ENCODE measurements at regions of chr15 and their contacts with region 1.

Region 1: DNA sequence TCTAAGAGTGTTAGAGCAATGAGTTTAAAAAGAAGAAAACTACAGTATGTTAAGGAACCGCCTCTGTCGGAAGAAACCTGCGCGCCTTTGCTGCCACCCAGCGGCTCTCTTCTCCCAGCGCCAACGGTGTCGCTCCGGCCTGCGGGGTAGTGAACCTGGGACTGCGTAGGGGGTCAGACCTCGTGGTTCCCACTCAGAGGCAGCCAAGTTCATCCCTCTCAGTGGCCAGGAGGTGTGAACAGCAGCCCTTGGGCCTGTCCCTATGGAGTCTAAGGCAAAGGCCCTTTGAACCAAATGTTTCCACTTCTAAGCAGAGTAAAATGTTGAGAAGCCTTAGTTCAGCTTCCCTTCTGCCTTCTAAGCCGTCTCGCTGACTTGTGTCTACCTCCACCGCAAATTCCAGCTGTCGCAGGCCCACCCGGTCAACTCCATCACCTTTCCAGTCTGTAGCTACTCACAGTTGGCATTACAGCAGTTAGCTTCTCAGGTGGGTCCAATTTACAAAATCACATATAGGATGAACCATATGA is 980 bp upstream of the RAB27A start:
- H3K4me3 ChIP-seq: peak overlapping the region; percentile 70
- H3K27ac ChIP-seq: no peak overlapping the region
- H3K4me1 ChIP-seq: peaks cover 2% of the 10 kb centered on the region; the same call in 1 of the 2 replicates
- CTCF ChIP-seq: peak; percentile 77

Region 2: GRCh38 chr15:55196458-55197361 is 93.9 kb before region 1 on chr15 and contains the start of gene RSL24D1:
- CTCF ChIA-PET with region 1: no interaction called
- POLR2A ChIA-PET with region 1: no interaction called
- H3K4me3 ChIP-seq: peak within 1 kb of the TSS; percentile 69
- H3K27ac ChIP-seq: peak within 1 kb of the TSS; percentile 73
- H3K4me1 ChIP-seq: no peaks in the 10 kb centered on the region
- CTCF ChIP-seq: peak; percentile 64

Region 3: DNA sequence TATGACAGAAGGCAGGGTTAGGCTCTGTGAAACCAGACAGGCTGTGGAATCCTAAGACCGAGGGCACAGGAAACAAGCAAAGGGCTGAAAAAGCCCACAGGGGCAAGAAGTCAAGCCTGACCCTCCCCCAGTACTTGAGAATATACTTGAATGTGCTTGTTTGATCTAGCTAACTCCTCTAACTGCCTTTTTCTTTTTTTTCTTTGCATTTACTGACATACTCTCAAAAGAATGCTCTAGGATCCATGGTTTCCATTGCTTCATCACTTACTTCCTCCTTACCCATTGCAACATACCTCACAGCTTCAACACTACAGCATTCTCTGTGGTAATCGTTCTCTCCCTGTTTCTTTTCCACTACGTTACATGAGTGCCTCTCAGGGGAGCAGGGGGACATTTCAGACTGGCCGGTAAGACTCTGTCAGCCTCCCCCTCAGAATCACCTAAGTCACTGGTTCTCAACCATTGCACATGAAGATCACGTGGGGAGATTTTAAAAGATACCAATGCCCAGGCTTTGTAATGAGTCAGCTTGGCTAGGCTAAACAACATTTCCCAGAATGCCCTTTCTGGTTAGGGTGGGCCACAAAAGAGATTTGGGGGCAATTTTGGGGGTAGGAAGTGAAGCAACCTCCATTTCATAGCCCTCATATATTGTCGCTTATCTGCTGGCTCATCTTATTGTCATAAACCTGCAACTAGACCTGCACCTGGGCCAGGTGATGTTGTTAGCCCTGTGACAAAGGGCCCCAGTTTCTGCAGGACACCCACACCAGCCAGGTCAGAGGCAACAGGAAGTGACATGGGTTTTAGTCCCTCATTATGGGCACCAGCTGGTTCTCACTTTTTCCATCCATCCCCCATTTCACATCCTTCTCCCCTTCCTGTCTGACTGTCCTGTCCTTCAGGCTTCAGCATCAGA is 69.2 kb before region 1 on chr15:
- CTCF ChIA-PET with region 1: interaction called, 13 read pairs
- POLR2A ChIA-PET with region 1: no interaction called
- H3K4me3 ChIP-seq: no peak overlapping the region
- H3K27ac ChIP-seq: no peak overlapping the region
- H3K4me1 ChIP-seq: no peaks in the 10 kb centered on the region
- CTCF ChIP-seq: no peak

Region 4: GRCh38 chr15:55434989-55435825 is 144.6 kb after region 1 on chr15:
- CTCF ChIA-PET with region 1: interaction called, 11 read pairs
- POLR2A ChIA-PET with region 1: no interaction called
- H3K4me3 ChIP-seq: no peak overlapping the region
- H3K27ac ChIP-seq: no peak overlapping the region
- H3K4me1 ChIP-seq: no peaks in the 10 kb centered on the region
- CTCF ChIP-seq: 0 out of 2 replicates have a peak, but pooled peaks have one; percentile 9